Activated T-helper 1 cell treated with anti-CD3 and anti-CD28 coated beads, Interleukin-12 subunit alpha, Interleukin-12 subunit beta, Interleukin-2, Interleukin-4 antibody, amounts not matched to agents 30 ng/mL and 10 ng/mL and 1 ng/mL, durations not matched to agents 14 hours and 24 hours and 36 hours (primary cell): ENCODE measurements at regions of chr5 and their contacts with region 1.

Region 1: GRCh38 chr5:134101686-134102439 is 12.6 kb upstream of the TCF7 start:
- DNase-seq: peak; percentile 58
- H3K4me3 Mint-ChIP-seq: peak overlapping the region; percentile 26
- H3K27ac Mint-ChIP-seq: no peak overlapping the region
- H3K4me1 Mint-ChIP-seq: peaks cover 59% of the 10 kb centered on the region
- H3K27me3 Mint-ChIP-seq: peaks cover 36% of the 10 kb centered on the region

Region 2: GRCh38 chr5:133977161-133977787 is 124.6 kb before region 1 on chr5:
- intact Hi-C with region 1: no loop called
- DNase-seq: no peak
- H3K4me3 Mint-ChIP-seq: no peak overlapping the region
- H3K27ac Mint-ChIP-seq: peak overlapping the region; percentile 73
- H3K4me1 Mint-ChIP-seq: peaks cover 34% of the 10 kb centered on the region
- H3K27me3 Mint-ChIP-seq: no peaks in the 10 kb centered on the region

Region 3: DNA sequence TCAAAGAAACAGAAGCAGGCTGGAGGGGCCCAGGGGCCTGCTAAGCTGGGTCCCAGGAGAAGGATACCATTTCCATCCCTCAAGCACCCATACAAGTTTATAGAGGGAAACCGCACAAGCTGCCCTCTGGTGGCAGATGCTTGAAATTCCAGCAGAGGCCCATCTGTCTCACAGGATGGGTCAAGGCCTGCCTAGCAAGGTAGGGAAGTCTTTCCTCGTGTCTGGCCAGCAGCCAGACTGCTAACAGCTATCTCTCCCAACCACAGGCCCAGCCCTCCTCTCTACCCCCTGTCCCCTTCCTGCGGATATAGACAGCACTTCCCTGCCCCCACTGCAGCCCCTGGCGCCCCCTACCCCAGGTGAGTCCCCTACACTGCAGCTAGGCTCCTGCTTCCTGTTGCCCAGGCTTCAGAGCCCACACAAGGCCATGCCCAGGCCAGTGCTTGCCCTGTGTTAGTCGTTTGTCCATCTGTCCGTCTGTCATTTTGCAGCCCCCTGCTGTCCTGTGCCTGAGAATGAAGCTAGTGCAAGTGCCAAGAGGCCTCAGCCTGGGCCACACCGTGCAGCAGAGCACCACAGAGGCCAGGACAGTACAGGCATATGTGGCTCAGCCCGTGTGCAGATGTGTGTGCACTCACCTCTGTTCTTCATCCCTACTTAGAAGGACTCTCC is 38.8 kb after region 1 on chr5:
- intact Hi-C with region 1: loop called (anchors 1 kb)
- DNase-seq: peak; percentile 43
- H3K4me3 Mint-ChIP-seq: no peak overlapping the region
- H3K27ac Mint-ChIP-seq: no peak overlapping the region
- H3K4me1 Mint-ChIP-seq: peaks cover 65% of the 10 kb centered on the region
- H3K27me3 Mint-ChIP-seq: peaks cover 4% of the 10 kb centered on the region

Region 4: DNA sequence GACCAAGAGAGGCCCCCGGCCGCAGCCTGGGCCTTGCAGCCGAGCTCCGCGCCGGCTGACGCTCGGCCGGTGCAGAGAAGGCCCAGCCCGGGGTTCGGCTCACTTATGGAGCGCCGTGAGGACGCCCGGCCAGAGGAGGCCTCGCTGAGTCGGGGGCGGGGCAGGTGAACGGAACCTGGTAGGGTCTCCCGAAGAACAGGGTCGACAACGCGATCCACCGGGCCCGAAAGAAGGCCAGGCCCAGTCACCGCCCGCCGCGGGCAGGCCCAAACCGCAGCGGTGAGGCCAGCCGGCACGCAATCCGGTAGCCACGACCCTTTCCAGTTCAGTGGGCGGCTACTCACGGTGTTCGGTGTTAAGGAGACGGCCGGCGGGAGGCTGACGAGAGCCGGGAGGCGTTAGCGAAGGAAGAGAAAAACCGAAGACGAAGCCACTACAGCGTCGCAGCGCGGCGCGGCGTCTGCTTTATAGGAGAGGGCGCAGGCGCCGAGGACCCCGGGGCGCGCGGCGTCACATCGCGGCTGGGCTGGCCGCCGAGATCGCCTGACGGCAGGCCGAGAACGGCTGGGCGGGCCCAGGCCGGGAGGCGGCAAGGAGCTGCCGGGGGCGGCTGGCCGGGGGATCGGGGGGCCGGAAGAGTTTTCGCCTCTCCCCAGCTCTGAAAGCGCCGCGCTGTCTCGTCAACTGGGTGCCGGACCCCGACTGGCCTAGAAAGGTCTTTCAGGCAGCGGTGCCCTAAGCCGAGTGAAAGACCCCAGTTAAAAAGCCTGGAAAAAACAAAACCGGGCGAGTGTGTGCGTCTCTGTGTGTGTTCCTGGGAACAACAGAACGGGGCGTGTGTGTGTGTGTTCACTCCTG is 74.9 kb after region 1 on chr5 and contains the start of gene SKP1:
- intact Hi-C with region 1: no loop called
- DNase-seq: peak; percentile 85
- H3K4me3 Mint-ChIP-seq: peak within 1 kb of the TSS; percentile 96
- H3K27ac Mint-ChIP-seq: peak within 1 kb of the TSS; percentile 97
- H3K4me1 Mint-ChIP-seq: peaks cover 28% of the 10 kb centered on the region
- H3K27me3 Mint-ChIP-seq: peaks cover 6% of the 10 kb centered on the region
- total RNA-seq, gene SKP1: 259 and 265 TPM in 2 replicates